ENCODE measurements at regions of chr11 and their contacts with region 1.

Region 1: DNA sequence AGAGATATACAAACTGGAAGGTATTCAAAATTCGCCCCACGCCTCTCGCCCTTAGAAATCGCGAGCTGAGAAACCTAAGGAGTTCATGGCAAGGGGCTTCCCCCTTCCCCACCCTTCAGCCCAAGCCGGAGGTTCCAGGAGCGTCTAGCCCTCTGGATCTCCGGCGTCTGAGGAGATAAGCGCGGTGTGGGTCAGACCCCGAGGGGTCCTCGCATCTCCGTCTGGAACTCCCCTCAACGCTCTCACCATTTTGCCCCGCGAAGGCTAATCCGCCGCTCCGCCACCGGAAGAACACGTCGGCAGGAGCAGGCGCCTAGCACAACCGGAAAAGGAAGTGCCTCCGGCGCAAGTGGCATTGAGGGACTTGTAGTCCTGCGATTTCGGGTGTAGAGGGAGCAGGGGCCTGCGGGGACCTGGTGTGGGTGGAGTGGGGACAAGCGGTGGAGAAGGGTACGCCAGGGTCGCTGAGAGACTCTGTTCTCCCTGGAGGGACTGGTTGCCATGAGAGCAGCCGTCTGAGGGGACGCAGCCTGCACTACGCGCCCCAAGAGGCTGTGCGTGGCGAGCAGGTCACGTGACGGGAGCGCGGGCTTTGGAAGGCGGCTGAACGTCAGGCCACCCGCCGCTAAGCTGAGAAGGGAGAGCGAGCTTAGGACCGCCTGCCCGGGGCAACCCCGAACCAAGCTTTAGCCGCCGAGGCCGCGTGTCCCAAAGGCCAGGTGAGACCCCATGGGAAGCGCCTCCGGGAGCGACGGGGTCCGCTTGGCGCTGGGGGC is at the starts of genes FEN1 and TMEM258:
- DNase-seq: peak; percentile 91 to 95 (median 94)
- ATAC-seq: peak; percentile 93
- H3K4me3 ChIP-seq: peak within 1 kb of the TSS; percentile 93
- H3K27ac ChIP-seq: peak within 1 kb of the TSS; percentile 97
- H3K4me1 ChIP-seq: no peaks in the 10 kb centered on the region
- H3K27me3 ChIP-seq: no peaks in the 10 kb centered on the region
- total RNA-seq, gene FEN1: 4.6 to 5.4 (median 5.1) TPM
- total RNA-seq, gene TMEM258: 107 to 113 (median 111) TPM

Region 2: DNA sequence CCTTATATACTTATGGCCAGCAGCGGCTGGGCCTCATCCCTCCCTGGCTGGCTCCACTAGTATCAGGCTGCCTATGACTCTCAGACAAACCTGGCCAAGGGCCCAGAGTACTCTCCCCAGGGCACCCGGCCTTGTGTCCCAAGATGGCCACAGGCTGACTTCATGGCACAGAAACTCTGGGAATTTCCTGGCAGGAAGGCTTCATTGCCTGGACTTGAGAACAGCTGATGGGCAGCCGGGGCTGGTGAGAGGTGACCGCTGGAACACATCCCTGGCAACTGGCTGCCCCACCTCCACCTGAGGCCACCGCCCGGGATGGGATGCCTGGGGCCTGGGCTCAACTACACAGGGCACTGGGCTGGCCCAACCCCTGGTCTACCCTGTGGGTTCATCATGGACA is 95.5 kb after region 1 on chr11:
- intact Hi-C with region 1: loop called in 2 of 4 experiments (anchors 5 to 10 kb)
- DNase-seq: peak; percentile 92 to 94 (median 93)
- ATAC-seq: peak; percentile 71
- H3K4me3 ChIP-seq: no peak overlapping the region
- H3K27ac ChIP-seq: peak overlapping the region; percentile 89
- H3K4me1 ChIP-seq: peaks cover 12% of the 10 kb centered on the region
- H3K27me3 ChIP-seq: no peaks in the 10 kb centered on the region

Region 3: DNA sequence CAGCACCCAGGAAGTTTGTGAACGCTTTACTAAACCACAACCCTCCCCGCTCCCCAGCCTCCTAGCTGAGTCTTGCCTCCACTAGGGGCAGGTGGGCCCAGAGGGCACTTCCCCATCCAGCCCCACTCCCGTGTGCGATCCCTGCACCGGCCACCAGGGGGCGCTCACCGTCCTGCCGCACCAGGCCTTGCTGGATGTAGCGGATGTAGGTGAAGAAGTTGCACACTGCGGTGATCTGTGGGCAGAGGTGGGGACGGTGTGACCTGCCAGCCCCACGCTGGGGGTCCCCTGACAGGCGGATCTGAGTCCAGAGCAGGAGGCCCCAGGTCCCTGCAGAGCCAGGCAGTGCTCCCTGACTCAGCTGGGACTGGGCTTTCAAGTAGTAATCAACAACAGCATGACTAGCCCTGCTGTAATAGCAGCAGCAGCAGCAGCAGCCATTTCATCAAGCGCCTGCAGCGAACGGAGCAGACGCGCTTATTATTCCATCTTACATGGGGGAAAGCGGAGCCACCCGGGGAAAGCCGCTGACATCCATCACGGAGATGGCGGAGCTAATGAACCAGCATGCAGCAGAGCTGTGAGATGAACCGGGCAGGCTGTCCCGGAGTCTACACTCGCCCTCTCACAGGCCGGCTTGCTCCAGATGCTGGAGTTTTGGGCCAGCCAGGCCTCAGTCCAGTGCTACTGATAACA is 106.8 kb after region 1 on chr11:
- intact Hi-C with region 1: loop called in 1 of 4 experiments (anchors 10 kb)
- DNase-seq: peak; percentile 78 to 95 (median 93)
- ATAC-seq: peak; percentile 71 to 83
- H3K4me3 ChIP-seq: no peak overlapping the region
- H3K27ac ChIP-seq: no peak overlapping the region
- H3K4me1 ChIP-seq: no peaks in the 10 kb centered on the region
- H3K27me3 ChIP-seq: no peaks in the 10 kb centered on the region

Region 4: DNA sequence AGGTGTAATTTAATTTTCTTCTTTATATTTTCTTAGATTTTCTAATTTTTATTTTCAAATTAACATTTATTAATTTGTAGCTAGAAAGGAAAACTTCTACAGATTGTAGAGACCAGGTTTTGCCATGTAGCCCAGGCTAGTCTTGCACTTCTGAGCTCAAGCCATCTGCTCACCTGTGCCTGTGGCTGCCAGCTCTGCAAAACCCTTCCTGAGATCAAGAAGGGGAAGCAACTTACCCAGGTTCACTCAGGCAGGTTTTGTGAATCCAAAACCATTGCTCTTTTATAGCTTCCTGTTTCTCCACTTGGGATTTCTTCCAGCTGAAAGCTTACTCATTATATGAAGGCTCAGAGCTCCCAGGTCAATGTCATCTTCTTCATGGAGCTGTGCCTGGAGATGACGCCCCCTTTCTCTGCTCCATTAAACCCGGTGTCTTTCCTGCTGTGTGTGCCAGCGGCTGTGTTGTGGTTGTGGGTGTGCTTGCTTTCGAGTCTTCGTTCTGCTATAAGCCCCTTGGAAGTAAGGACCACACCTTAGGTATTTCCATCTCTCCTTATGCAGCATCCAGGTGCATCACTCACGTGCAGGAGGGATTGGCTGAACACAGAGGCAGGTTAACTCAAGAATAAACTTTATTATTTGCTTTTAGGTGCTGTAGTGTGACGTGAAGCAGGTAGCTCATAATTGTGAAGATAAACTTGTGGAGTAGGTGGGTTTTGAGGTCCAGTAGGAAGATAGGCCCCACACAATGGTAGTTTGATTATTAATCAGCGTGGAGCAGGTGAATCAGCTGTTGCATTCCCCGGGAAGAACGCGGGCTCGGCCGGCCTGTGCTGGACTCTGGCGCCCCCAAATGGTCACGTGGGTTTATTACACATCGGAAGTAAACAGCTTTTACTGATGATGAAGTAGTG is 289.1 kb after region 1 on chr11:
- intact Hi-C with region 1: loop called in 1 of 4 experiments (anchors 10 kb)
- DNase-seq: peak; percentile 77 to 87 (median 84)
- ATAC-seq: peak; percentile 80 to 89
- H3K4me3 ChIP-seq: no peak overlapping the region
- H3K27ac ChIP-seq: no peak overlapping the region
- H3K4me1 ChIP-seq: no peaks in the 10 kb centered on the region
- H3K27me3 ChIP-seq: no peaks in the 10 kb centered on the region

Region 5: GRCh38 chr11:62108017-62108750 is 315.7 kb after region 1 on chr11:
- intact Hi-C with region 1: loop called in 2 of 4 experiments (anchors 5 to 10 kb)
- DNase-seq: no peak
- ATAC-seq: peak in 1 of 2 donors; percentile 19
- H3K4me3 ChIP-seq: no peak overlapping the region
- H3K27ac ChIP-seq: peak overlapping the region; percentile 44
- H3K4me1 ChIP-seq: peaks cover 4% of the 10 kb centered on the region
- H3K27me3 ChIP-seq: no peaks in the 10 kb centered on the region

Region 6: DNA sequence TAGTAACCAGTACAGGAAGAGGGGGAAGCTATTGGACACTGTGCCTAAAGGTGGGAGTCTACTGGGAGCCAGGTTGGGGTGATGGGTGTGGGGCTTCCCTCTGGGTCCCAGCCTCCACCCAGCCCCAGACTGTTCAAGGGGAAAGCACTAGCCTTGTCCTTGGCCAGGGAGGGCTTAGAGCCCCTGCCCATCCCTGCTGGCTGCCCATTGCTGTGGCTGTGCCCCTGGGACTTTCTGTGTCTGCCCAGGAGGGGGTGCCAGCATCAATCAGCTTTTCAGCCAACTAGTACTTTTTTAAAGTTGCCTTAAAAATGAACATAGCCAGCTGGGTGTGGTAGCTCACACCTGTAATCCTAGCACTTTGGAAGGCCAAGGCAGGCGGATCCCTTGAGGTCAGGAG is 351.2 kb after region 1 on chr11:
- intact Hi-C with region 1: no loop called
- DNase-seq: no peak
- ATAC-seq: peak in 1 of 2 donors; percentile 11
- H3K4me3 ChIP-seq: no peak overlapping the region
- H3K27ac ChIP-seq: peak overlapping the region; percentile 11
- H3K4me1 ChIP-seq: no peaks in the 10 kb centered on the region
- H3K27me3 ChIP-seq: no peaks in the 10 kb centered on the region